Right lobe of liver (tissue), 6 donors: ENCODE measurements at regions of chr16 and their contacts with region 1.

Region 1: DNA sequence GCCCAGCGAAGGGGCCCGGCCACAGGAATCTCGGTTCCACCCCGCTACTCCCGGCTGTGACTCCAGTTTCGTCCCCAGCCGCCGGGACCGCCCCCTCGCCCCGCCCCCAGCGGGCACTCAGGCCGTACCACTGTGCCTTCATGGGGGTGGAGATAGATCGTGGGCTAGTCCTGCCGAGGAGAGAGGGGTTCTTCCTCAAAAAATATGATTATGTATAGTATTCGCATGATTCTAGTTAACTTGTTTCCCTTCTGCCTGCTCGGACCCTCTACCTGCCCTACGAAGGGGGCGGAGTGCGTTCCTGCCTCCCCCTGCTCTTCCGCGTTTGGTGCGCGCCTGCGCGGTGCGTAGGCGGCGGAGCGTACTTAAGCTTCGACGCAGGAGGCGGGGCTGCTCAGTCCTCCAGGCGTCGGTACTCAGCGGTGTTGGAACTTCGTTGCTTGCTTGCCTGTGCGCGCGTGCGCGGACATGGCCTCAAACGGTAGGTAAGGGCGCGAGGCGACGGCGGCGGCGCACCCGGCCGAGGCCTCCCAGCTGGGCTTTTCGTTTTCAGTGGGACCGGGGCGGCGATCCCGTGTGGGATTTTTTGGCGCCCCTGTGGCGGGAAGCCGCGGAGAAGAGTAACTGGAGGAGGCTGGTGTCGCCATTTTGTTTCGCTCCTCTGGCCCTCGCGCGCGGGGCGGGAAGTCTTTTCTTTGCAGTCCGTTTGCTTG is at the start of gene FUS:
- DNase-seq: peak; percentile 93 to 95 (median 93)
- ATAC-seq: peak; percentile 89 to 92 (median 90)
- H3K4me3 ChIP-seq: peak within 1 kb of the TSS; percentile 78 to 97 (median 79)
- H3K27ac ChIP-seq: peak within 1 kb of the TSS; percentile 97 to 99 (median 97)
- H3K4me1 ChIP-seq: peaks cover 0 to 19% (median 7%) of the 10 kb centered on the region in 4 donors
- H3K27me3 ChIP-seq: no peaks in the 10 kb centered on the region
- CTCF ChIP-seq: no peak
- POLR2A ChIP-seq: peak; percentile 97
- total RNA-seq, gene FUS: 18.7 to 69.7 (median 40.4) TPM

Region 2: DNA sequence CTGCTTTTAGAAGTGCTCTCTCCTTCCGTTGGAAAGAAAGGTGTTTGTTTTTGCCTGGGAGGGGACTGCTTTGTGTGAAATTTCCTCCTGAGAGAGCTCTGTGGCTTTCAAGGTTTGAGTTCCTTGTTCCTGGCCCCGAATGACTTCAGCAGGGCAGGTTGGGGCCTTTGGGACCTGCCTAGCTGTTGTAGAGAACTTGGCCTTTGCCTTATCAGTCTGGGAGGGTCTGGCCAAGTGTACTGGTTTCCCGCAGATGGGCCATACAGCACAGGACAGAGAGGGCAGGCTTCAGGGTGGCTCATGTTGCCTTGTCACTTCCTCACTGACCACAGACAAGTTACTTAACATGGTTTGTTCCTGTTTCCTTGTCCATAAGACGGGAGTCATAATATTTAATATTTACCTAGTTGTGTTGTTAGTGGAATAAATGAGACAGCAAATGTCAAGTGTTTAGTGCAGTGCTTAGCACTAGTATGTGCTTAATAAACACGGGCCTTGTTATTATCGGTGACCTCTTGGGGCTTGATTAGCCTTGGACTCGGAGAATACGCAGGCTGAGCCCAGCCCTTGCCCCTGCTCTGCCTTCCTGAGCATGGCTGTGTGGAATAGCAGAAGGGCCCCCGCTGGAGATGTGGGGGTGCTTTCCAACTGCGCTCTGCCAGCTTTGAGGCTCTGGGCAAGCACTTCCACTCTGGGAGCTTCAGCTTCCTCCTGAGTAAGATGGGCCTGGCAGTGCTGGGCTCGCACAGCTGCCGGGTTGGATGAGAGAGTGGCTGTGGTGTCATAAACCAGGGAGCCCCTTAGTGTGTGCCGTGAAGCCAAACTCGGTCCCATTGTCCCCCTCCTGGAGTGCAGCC is 51.0 kb before region 1 on chr16:
- intact Hi-C with region 1: no loop called
- DNase-seq: no peak
- ATAC-seq: peak; percentile 43 to 75 (median 62)
- H3K4me3 ChIP-seq: no peak overlapping the region
- H3K27ac ChIP-seq: peak overlapping the region; percentile 55 to 78 (median 73)
- H3K4me1 ChIP-seq: no peaks in the 10 kb centered on the region
- H3K27me3 ChIP-seq: no peaks in the 10 kb centered on the region
- CTCF ChIP-seq: no peak
- POLR2A ChIP-seq: peak; percentile 29

Region 3: GRCh38 chr16:31458844-31459721 is 279.2 kb after region 1 on chr16 and contains the start of gene ARMC5:
- intact Hi-C with region 1: loop called in 1 of 2 experiments (anchors 10 kb)
- DNase-seq: peak; percentile 98 to 99 (median 98)
- ATAC-seq: peak; percentile 73 to 81 (median 76)
- H3K4me3 ChIP-seq: peak within 1 kb of the TSS; percentile 75 to 81 (median 79)
- H3K27ac ChIP-seq: peak within 1 kb of the TSS; percentile 99 to 100 (median 99)
- H3K4me1 ChIP-seq: peaks cover 0 to 58% (median 22%) of the 10 kb centered on the region in 4 donors
- H3K27me3 ChIP-seq: no peaks in the 10 kb centered on the region
- CTCF ChIP-seq: peak; percentile 49 to 63 (median 62)
- POLR2A ChIP-seq: peak; percentile 83
- total RNA-seq, gene ARMC5: 3.9 to 20.9 (median 11.0) TPM